ENCODE measurements at regions of chr12 and their contacts with region 1.

Region 1: GRCh38 chr12:8590842-8591550 is 21.7 kb downstream of the AICDA start:
- DNase-seq: peak; percentile 61
- H3K4me3 ChIP-seq: peak overlapping the region; percentile 42
- H3K27ac ChIP-seq: peak overlapping the region; percentile 22
- H3K4me1 ChIP-seq: peaks cover 14% of the 10 kb centered on the region
- CTCF ChIP-seq: peak; percentile 70

Region 2: GRCh38 chr12:8577879-8578278 is 13.1 kb before region 1 on chr12:
- CTCF ChIA-PET with region 1: interaction called, 12 read pairs
- POLR2A ChIA-PET with region 1: interaction called, 7 read pairs
- intact Hi-C with region 1: no loop called
- DNase-seq: peak; percentile 49
- H3K4me3 ChIP-seq: peak overlapping the region; percentile 28
- H3K27ac ChIP-seq: peak overlapping the region; percentile 75
- H3K4me1 ChIP-seq: peaks cover 37% of the 10 kb centered on the region
- CTCF ChIP-seq: peak; percentile 70